ENCODE measurements at regions of chr2 and their contacts with region 1.

Region 1: DNA sequence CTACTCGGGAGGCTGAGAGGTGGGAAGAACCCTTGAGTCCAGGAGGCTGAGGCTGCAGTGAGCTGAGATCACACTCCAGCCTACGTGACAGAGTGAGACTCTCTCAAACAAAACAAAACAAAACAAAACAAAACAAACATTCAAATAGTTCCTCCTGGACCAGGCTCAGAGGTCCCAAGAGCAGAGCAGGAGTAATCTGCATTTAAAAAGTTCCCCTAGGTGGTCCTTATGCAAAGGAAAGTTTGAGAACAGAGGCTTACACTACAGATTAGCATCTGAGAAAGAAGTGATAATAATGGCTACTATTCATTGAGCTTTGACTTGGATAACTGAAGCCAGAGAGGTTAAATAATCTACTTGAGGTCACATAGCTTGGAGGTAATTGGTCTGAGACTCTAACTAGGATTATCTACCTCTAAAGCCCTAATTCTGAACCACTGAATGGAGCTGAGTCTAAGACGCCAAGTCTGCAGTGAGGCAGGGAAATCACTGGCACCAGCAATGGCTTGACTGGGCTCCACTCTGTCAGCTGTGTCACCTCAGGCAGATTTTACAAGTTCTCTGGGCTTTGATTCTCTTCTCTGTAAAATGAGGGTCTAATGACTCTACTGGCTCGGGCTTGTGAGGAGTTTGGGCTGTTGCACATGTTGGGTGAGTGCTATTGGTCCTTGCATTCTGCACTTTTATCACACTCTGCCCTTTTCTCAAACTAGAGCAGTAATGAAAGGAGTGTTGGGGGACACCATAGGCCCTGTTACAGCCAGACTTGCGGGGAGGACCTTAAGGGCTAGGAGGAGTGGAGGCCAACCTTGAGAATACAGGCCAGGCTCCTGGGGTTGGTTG is 29.2 kb upstream of the DLX2 start:
- DNase-seq: no peak
- ATAC-seq: no peak
- H3K4me3 ChIP-seq: no peak overlapping the region
- H3K4me3 Mint-ChIP-seq: no peak overlapping the region
- H3K27ac ChIP-seq: no peak overlapping the region
- H3K27ac Mint-ChIP-seq: no peak overlapping the region
- H3K4me1 ChIP-seq: no peaks in the 10 kb centered on the region
- H3K4me1 Mint-ChIP-seq: no peaks in the 10 kb centered on the region
- H3K27me3 ChIP-seq: no peaks in the 10 kb centered on the region
- H3K27me3 Mint-ChIP-seq: peaks cover 0 to 34% (median 7%) of the 10 kb centered on the region in 5 donors

Region 2: DNA sequence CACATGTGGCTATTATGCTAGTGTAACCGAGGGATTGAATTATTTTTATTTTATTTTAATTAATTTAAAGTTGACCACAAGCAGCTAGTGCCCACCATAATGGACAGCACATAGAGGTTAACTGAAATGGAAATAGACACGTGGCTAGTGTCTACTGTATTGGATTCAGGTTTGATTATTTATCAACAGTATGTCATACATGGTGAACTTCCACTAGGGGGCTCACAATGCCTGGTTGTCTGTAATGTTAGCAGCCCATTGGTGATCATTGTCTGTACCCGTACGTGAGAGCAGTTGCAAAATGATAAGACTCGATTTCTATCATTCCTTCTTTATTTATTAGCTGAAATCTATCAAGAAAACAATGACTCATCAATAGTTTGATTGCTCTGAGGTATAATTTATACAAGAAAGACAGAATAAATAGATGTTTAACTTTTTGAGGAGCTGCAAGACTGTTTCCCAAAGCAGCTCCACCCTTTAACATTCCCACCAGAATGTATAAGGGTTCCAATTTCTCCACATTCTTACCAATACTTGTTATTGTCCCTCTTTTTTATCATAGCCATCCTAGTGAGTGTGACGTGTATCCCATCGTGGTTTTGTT is 533.1 kb before region 1 on chr2:
- CTCF ChIA-PET with region 1: no interaction called
- POLR2A ChIA-PET with region 1: no interaction called
- intact Hi-C with region 1: loop called (anchors 1 kb)
- DNase-seq: peak in 7 of 9 donors; percentile 22 to 64 (median 51)
- ATAC-seq: peak; percentile 94
- H3K4me3 ChIP-seq: no peak overlapping the region
- H3K4me3 Mint-ChIP-seq: no peak overlapping the region
- H3K27ac ChIP-seq: no peak overlapping the region
- H3K27ac Mint-ChIP-seq: no peak overlapping the region
- H3K4me1 ChIP-seq: peaks cover 0 to 3% of the 10 kb centered on the region in 2 donors
- H3K4me1 Mint-ChIP-seq: peaks cover 0 to 6% (median 0%) of the 10 kb centered on the region in 7 donors
- H3K27me3 ChIP-seq: no peaks in the 10 kb centered on the region
- H3K27me3 Mint-ChIP-seq: peaks cover 0 to 25% (median 4%) of the 10 kb centered on the region in 5 donors

Region 3: GRCh38 chr2:171771463-171771862 is 360.5 kb before region 1 on chr2:
- CTCF ChIA-PET with region 1: no interaction called
- POLR2A ChIA-PET with region 1: no interaction called
- intact Hi-C with region 1: no loop called
- DNase-seq: no peak
- ATAC-seq: no peak
- H3K4me3 ChIP-seq: no peak overlapping the region
- H3K4me3 Mint-ChIP-seq: no peak overlapping the region
- H3K27ac ChIP-seq: no peak overlapping the region
- H3K27ac Mint-ChIP-seq: no peak overlapping the region
- H3K4me1 ChIP-seq: no peaks in the 10 kb centered on the region
- H3K4me1 Mint-ChIP-seq: peaks cover 0 to 4% (median 0%) of the 10 kb centered on the region in 7 donors
- H3K27me3 ChIP-seq: no peaks in the 10 kb centered on the region
- H3K27me3 Mint-ChIP-seq: no peaks in the 10 kb centered on the region